Right ventricle myocardium superior (tissue), 1 donor: ENCODE measurements at regions of chr9 and their contacts with region 1.

Region 1: DNA sequence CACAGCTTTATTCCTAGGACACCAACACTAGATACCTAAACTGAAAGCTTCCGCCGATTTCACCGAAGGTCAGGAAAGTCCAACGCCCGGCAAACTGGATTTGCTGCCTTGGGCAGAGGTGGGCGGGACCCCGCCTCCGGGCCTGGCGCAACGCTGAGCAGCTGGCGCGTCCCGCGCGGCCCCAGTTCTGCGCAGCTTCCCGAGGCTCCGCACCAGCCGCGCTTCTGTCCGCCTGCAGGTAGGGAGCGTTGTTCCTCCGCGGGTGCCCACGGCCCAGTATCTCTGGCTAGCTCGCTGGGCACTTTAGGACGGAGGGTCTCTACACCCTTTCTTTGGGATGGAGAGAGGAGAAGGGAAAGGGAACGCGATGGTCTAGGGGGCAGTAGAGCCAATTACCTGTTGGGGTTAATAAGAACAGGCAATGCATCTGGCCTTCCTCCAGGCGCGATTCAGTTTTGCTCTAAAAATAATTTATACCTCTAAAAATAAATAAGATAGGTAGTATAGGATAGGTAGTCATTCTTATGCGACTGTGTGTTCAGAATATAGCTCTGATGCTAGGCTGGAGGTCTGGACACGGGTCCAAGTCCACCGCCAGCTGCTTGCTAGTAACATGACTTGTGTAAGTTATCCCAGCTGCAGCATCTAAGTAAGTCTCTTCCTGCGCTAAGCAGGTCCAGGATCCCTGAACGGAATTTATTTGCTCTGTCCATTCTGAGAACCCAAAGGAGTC is at the start of gene CD274:
- DNase-seq: peak; percentile 94
- ATAC-seq: peak; percentile 99
- total RNA-seq, gene CD274: 9.0 TPM

Region 2: GRCh38 chr9:5510360-5510931 is 59.9 kb after region 1 on chr9 and contains the start of gene PDCD1LG2:
- intact Hi-C with region 1: loop called (anchors 5 kb)
- DNase-seq: no peak
- ATAC-seq: peak; percentile 33
- total RNA-seq, gene PDCD1LG2: 2.4 TPM

Region 3: GRCh38 chr9:5586391-5586802 is 135.9 kb after region 1 on chr9:
- intact Hi-C with region 1: loop called (anchors 2 kb)
- DNase-seq: no peak
- ATAC-seq: no peak